ENCODE measurements at regions of chr19 and their contacts with region 1.

Region 1: GRCh38 chr19:13195678-13196077 is 45.5 kb downstream of the IER2 start:
- DNase-seq: peak; percentile 78
- H3K4me3 Mint-ChIP-seq: no peak overlapping the region
- H3K27ac Mint-ChIP-seq: peak overlapping the region; percentile 49
- H3K4me1 Mint-ChIP-seq: peaks cover 26% of the 10 kb centered on the region
- H3K27me3 Mint-ChIP-seq: no peaks in the 10 kb centered on the region

Region 2: DNA sequence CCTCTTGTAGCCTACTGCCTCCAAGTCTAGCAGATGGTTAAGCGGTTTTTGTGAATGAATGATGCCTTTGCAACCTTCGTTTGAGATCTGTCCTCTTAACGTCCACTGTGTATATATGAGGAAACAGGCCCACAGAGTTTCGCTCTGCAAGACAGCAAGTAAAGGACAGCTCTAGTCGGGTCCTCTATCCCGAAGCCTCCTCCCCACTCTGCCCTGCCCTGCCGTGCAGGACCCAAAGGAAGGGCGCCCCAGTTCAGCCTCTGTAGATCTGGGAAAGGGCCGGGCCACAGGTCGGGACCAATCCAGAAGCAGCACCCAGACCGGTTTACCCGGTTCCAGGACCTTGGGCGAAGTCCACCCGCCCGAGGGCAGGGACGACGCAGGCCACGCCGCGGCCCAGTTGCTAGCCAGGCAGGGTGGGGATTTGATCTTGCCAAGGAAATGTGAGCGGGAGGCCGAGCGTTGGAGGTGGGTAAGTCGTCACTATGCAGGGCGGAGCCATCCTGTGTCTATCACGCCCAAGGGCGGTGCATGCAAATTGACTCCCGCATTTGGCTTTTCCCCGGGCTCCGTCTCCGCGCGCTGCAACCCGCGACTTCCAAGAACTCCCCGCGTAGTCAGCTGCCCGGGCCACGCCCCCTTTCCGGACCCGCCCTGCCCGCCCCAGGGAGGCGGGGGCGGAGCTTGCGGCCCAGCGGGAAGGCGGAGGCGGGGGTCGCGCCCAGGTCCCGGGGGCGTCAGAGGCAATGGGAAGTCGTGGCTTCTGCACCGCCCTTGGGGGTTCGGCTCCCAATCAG is 33.0 kb before region 1 on chr19:
- CTCF ChIA-PET with region 1: interaction called, 13 read pairs
- POLR2A ChIA-PET with region 1: no interaction called
- intact Hi-C with region 1: no loop called
- DNase-seq: peak; percentile 96
- H3K4me3 Mint-ChIP-seq: peak overlapping the region; percentile 87
- H3K27ac Mint-ChIP-seq: peak overlapping the region; percentile 99
- H3K4me1 Mint-ChIP-seq: peaks cover 60% of the 10 kb centered on the region
- H3K27me3 Mint-ChIP-seq: no peaks in the 10 kb centered on the region

Region 3: GRCh38 chr19:13181747-13182388 is 13.8 kb before region 1 on chr19:
- CTCF ChIA-PET with region 1: interaction called, 19 read pairs
- POLR2A ChIA-PET with region 1: no interaction called
- intact Hi-C with region 1: no loop called
- DNase-seq: peak; percentile 61
- H3K4me3 Mint-ChIP-seq: peak overlapping the region; percentile 8
- H3K27ac Mint-ChIP-seq: peak overlapping the region; percentile 60
- H3K4me1 Mint-ChIP-seq: peaks cover 25% of the 10 kb centered on the region
- H3K27me3 Mint-ChIP-seq: no peaks in the 10 kb centered on the region

Region 4: DNA sequence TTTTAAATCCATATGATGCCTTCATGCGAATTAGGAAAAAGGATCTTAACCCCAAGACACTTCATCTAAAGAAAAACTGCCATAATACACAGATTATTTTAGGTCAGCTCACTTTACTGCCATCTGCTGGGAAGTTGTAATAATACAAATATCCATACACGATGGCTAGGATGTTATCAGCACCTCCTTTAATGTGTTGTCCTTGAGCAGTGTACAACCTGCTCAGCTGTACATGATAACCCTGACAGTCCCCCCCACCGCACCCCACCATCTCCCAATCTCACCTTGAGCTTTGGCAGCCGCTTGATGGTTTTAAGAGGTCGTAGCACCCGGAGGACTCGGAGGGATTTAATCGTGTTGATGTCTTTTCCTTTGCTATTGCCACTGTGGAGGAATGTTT is 66.8 kb after region 1 on chr19:
- CTCF ChIA-PET with region 1: interaction called, 71 read pairs
- POLR2A ChIA-PET with region 1: interaction called, 5 read pairs
- intact Hi-C with region 1: loop called (anchors 1 kb)
- DNase-seq: no peak
- H3K4me3 Mint-ChIP-seq: no peak overlapping the region
- H3K27ac Mint-ChIP-seq: no peak overlapping the region
- H3K4me1 Mint-ChIP-seq: peaks cover 14% of the 10 kb centered on the region
- H3K27me3 Mint-ChIP-seq: peaks cover 13% of the 10 kb centered on the region

Region 5: DNA sequence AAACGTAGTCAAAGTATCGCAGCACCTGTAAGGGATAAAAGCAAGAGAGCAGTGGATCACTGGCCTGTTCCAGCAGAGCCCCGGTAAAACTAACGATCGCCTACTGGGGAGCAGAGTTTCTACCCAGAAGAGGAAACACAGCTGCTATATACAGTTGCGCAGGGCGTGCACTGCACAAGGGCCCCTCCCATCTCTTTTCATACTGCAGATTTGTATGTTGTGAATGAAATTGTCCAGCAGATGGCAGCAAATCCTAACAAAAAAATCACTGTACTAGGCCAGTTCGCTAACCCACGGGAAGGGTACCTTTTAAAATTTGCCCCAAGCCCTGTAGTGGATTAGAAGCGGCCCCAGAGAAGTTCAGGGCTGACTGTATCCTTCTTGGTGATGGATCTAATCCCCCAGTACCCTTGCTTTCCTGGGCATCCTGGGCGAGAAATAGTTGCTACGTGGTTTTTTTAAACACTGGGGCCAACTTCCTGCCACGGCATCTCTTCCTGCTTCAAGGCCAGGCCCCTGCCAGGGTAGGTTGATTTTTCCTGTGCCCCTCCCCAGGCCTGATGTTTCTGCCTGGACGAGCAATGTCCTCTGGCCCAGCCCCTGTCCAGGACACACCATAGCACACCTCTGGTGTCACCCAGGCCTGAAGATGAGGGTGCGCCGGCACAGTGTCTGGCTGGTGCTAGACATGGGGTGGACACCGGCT is 81.6 kb after region 1 on chr19:
- CTCF ChIA-PET with region 1: interaction called, 17 read pairs
- POLR2A ChIA-PET with region 1: no interaction called
- intact Hi-C with region 1: no loop called
- DNase-seq: peak; percentile 69
- H3K4me3 Mint-ChIP-seq: peak overlapping the region; percentile 41
- H3K27ac Mint-ChIP-seq: peak overlapping the region; percentile 73
- H3K4me1 Mint-ChIP-seq: peaks cover 25% of the 10 kb centered on the region
- H3K27me3 Mint-ChIP-seq: no peaks in the 10 kb centered on the region

Region 6: DNA sequence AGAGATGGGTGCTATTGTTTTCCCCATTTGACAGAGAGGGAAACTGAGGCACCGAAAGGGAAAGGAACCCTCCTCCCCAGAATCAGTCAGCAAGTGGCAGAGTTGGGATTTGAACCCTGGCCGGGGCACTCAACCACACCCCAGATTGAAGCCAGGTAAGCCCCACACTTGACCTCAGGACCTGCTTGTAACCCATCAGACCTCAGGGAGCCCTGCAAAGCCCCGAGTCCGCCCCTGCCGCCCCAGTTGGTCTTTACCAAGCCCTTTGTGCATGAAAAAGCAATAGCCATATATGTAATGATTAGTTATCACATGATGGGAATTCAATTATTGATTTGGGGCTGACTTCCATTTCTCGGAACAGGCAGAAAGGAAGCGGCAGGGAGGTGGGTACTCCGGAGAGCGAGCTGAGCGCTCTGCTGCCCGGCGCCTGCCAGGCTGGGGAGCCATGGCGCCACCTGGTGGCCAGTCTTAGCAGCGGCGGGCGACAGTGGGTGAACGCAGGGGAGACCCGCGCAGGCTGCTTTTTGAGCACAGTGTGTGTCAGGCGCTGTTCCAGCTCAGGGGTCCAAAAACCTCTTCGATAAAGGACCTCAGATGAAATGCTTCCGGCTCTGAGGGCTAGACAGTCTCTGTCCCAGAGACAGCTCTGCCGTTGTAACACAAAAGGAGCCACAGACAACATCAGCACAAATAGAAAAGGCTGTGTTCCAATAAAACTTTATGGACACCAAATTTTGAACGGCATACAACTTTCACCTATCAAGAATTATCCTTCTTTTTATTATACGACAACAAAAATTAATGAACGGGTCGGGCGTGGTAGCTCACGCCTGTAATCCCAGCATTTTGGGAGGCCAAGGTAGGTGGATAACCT is 393.5 kb after region 1 on chr19:
- CTCF ChIA-PET with region 1: interaction called, 5 read pairs
- POLR2A ChIA-PET with region 1: no interaction called
- intact Hi-C with region 1: loop called (anchors 10 kb)
- DNase-seq: peak; percentile 87
- H3K4me3 Mint-ChIP-seq: no peak overlapping the region
- H3K27ac Mint-ChIP-seq: no peak overlapping the region
- H3K4me1 Mint-ChIP-seq: no peaks in the 10 kb centered on the region
- H3K27me3 Mint-ChIP-seq: peaks cover 8% of the 10 kb centered on the region

Measured in activated CD4-positive, alpha-beta memory T cell treated with anti-CD3 and anti-CD28 coated beads for 36 hours (primary cell).